CD8-positive, alpha-beta memory T cell (primary cell): ENCODE measurements at regions of chr6 and their contacts with region 1.

Region 1: GRCh38 chr6:150056156-150056555 is 12.8 kb downstream of the ULBP3 start:
- DNase-seq: no peak
- H3K4me3 ChIP-seq: no peak overlapping the region
- H3K4me3 Mint-ChIP-seq: no peak overlapping the region
- H3K27ac ChIP-seq: no peak overlapping the region
- H3K27ac Mint-ChIP-seq: no peak overlapping the region
- H3K4me1 ChIP-seq: no peaks in the 10 kb centered on the region
- H3K4me1 Mint-ChIP-seq: peaks cover 8 to 10% (median 10%) of the 10 kb centered on the region in 3 donors
- H3K27me3 ChIP-seq: peaks cover 14% of the 10 kb centered on the region
- H3K27me3 Mint-ChIP-seq: peaks cover 37 to 78% of the 10 kb centered on the region in 2 donors

Region 2: DNA sequence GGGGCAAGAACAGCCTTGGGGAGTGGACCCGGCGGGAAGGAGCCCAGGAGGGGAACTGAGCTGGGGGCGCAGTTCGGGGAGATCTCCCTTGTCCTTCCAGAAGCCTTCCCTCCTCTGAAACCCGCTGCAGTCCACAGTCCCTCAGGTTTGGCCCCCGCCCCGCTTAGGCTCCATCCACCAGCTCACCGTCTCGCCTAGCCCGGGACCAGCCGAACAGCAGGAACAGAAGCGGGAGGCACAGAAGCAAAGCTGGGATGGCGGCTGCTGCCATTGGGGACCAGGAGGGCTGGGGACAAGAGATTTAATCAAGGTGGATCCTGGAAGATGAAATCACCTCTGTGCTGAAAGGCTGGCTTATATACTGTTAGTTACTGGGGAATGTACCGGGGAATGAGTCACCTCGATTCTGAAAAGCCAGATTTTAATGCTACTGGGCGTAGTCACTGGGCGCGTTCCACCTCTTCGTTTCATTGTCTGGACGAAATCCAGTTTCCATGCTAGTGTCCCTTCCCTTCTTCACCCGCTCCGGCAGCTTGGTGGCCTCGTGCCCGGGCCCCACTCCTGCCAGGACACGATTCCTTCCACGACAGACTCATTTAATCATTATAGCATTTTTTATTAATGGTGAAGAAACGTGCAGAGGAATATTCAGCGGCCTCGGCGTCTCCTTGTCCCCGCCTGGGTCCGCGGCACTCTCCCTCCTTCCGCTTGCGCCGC is 30.8 kb before region 1 on chr6 and contains the start of gene RAET1L:
- CTCF ChIA-PET with region 1: no interaction called
- POLR2A ChIA-PET with region 1: no interaction called
- DNase-seq: no peak
- H3K4me3 ChIP-seq: no peak within 1 kb of the TSS
- H3K4me3 Mint-ChIP-seq: peak within 1 kb of the TSS in 6 of 7 donors; percentile 8 to 65 (median 43)
- H3K27ac ChIP-seq: no peak within 1 kb of the TSS
- H3K27ac Mint-ChIP-seq: peak within 1 kb of the TSS in 1 of 8 donors; percentile 24
- H3K4me1 ChIP-seq: peaks cover 9% of the 10 kb centered on the region
- H3K4me1 Mint-ChIP-seq: peaks cover 6 to 12% (median 7%) of the 10 kb centered on the region in 3 donors
- H3K27me3 ChIP-seq: peaks cover 10% of the 10 kb centered on the region
- H3K27me3 Mint-ChIP-seq: peaks cover 43 to 59% of the 10 kb centered on the region in 2 donors
- total RNA-seq, gene RAET1L: not detected

Region 3: GRCh38 chr6:150068720-150069648 is 12.8 kb after region 1 on chr6 and contains the start of gene ULBP3:
- CTCF ChIA-PET with region 1: interaction called, 18 read pairs
- POLR2A ChIA-PET with region 1: no interaction called
- DNase-seq: peak; percentile 50 to 71 (median 63)
- H3K4me3 ChIP-seq: peak within 1 kb of the TSS; percentile 57
- H3K4me3 Mint-ChIP-seq: peak within 1 kb of the TSS; percentile 85 to 94 (median 89)
- H3K27ac ChIP-seq: peak within 1 kb of the TSS; percentile 20
- H3K27ac Mint-ChIP-seq: peak within 1 kb of the TSS in 7 of 8 donors; percentile 29 to 76 (median 47)
- H3K4me1 ChIP-seq: peaks cover 7% of the 10 kb centered on the region
- H3K4me1 Mint-ChIP-seq: peaks cover 21 to 28% (median 26%) of the 10 kb centered on the region in 3 donors
- H3K27me3 ChIP-seq: no peaks in the 10 kb centered on the region
- H3K27me3 Mint-ChIP-seq: peaks cover 5 to 6% of the 10 kb centered on the region in 2 donors
- total RNA-seq, gene ULBP3: 1.2 to 1.6 TPM